Mammary epithelial cell (primary cell): ENCODE measurements at regions of chr9 and their contacts with region 1.

Region 1: DNA sequence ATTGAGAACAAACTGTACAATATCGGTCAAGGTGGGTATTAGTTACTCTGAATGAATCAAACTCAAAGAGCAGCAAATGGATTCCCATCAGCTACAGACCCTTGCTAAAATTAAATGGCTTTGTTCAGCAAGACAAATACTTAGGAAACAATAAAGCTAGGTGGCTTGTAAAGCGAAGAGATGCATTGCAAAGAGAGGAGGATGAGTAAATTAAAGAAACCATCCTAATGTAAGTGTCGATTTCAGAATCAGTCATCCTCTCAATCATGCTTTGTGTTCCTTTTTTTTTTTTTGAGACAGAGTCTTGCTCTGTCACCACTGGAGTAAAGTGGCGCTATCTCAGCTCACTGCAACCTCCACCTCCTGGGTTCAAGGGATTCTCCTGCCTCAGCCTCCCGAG is 359.2 kb upstream of the ZNF462 start:
- DNase-seq: no peak
- H3K4me3 ChIP-seq: no peak overlapping the region
- H3K27ac ChIP-seq: no peak overlapping the region
- H3K4me1 ChIP-seq: no peaks in the 10 kb centered on the region
- H3K27me3 ChIP-seq: no peaks in the 10 kb centered on the region
- CTCF ChIP-seq: no peak

Region 2: DNA sequence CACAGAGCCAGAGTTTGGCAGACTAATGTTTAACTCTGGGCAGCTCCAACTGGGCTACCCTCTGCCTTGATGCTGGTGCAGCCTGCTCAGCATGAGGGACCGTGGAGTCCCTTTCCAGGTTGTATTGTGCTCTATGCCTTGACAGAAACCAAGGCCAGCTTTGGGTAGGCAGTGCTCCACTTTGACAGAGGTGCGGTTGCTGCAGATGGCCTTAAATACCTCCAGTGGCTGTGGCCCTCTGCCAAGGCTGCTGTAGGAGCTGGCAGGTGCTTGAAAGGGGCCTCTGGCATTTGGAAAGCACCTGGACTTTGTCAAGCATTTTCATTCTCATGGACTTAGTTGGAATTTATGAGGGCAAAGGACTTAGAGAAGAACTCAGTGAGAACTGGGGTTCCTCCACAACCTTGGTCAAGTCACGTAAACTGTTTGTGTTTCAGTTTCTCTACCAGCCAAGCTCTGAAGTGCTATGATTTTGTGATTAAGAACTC is 109.5 kb after region 1 on chr9:
- CTCF ChIA-PET with region 1: no interaction called
- dilution Hi-C with region 1: loop called (anchors 5 kb)
- in situ Hi-C with region 1: no loop called
- intact Hi-C with region 1: no loop called
- DNase-seq: no peak
- H3K4me3 ChIP-seq: no peak overlapping the region
- H3K27ac ChIP-seq: no peak overlapping the region
- H3K4me1 ChIP-seq: peaks cover 5% of the 10 kb centered on the region
- H3K27me3 ChIP-seq: no peaks in the 10 kb centered on the region
- CTCF ChIP-seq: no peak